Endothelial cell of umbilical vein (primary cell): ENCODE measurements at regions of chr18 and their contacts with region 1.

Region 1: DNA sequence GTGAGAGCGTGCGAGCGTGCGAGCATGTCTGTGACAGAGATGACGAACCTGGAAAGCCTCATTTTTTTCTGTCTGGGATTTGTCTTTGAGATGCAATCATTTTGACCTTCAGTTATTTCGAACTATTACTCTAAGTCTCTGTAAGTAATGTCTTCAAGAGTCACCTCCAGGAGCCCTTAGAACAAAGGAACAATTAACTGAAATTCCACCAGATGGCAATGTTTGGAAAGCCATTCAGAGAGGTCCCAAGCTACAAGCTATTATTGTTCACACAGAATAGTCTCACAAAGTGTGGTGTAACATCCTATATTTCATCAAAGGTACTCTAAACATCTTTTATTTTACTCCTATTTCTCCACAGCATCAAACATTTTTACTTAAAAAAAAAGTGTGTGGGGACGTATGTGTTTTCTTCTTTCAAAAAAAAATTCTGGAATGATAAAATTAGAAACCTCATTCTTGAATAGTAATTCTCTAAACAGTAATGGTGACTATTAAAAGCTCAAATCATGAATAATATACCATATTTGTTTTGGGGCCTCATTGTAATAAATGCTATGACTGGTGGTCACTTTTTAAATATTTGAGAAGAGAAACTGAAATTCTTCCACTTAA is 35.1 kb upstream of the MAPRE2 start:
- DNase-seq: peak; percentile 83
- H3K4me3 ChIP-seq: no peak overlapping the region
- H3K27ac ChIP-seq: no peak overlapping the region
- H3K4me1 ChIP-seq: peaks cover 4% of the 10 kb centered on the region
- H3K27me3 ChIP-seq: no peaks in the 10 kb centered on the region
- CTCF ChIP-seq: peak; percentile 27 to 38
- POLR2A ChIP-seq: no peak

Region 2: GRCh38 chr18:35019933-35020332 is 13.9 kb after region 1 on chr18:
- CTCF ChIA-PET with region 1: interaction called, 14 read pairs
- POLR2A ChIA-PET with region 1: no interaction called
- dilution Hi-C with region 1: no loop called
- intact Hi-C with region 1: loop called (anchors 1 kb)
- DNase-seq: peak; percentile 33
- H3K4me3 ChIP-seq: no peak overlapping the region
- H3K27ac ChIP-seq: no peak overlapping the region
- H3K4me1 ChIP-seq: peaks cover 9% of the 10 kb centered on the region
- H3K27me3 ChIP-seq: no peaks in the 10 kb centered on the region
- CTCF ChIP-seq: no peak
- POLR2A ChIP-seq: no peak

Region 3: GRCh38 chr18:35040988-35041814 is 35.1 kb after region 1 on chr18 and contains the start of gene MAPRE2:
- CTCF ChIA-PET with region 1: interaction called, 59 read pairs
- POLR2A ChIA-PET with region 1: no interaction called
- dilution Hi-C with region 1: no loop called
- intact Hi-C with region 1: loop called (anchors 1 kb)
- DNase-seq: peak; percentile 99
- H3K4me3 ChIP-seq: peak within 1 kb of the TSS; percentile 88 to 99 (median 89)
- H3K27ac ChIP-seq: peak within 1 kb of the TSS; percentile 80
- H3K4me1 ChIP-seq: peaks cover 61% of the 10 kb centered on the region
- H3K27me3 ChIP-seq: no peaks in the 10 kb centered on the region
- CTCF ChIP-seq: no peak
- POLR2A ChIP-seq: peak; percentile 96
- total RNA-seq, gene MAPRE2: 111 and 117 TPM in 2 replicates

Region 4: GRCh38 chr18:35127201-35127600 is 121.1 kb after region 1 on chr18:
- CTCF ChIA-PET with region 1: interaction called, 20 read pairs
- POLR2A ChIA-PET with region 1: no interaction called
- dilution Hi-C with region 1: no loop called
- intact Hi-C with region 1: loop called (anchors 1 kb)
- DNase-seq: peak; percentile 21
- H3K4me3 ChIP-seq: no peak overlapping the region
- H3K27ac ChIP-seq: no peak overlapping the region
- H3K4me1 ChIP-seq: peaks cover 9% of the 10 kb centered on the region
- H3K27me3 ChIP-seq: no peaks in the 10 kb centered on the region
- CTCF ChIP-seq: peak in 1 of 2 donors; percentile 28
- POLR2A ChIP-seq: no peak

Region 5: DNA sequence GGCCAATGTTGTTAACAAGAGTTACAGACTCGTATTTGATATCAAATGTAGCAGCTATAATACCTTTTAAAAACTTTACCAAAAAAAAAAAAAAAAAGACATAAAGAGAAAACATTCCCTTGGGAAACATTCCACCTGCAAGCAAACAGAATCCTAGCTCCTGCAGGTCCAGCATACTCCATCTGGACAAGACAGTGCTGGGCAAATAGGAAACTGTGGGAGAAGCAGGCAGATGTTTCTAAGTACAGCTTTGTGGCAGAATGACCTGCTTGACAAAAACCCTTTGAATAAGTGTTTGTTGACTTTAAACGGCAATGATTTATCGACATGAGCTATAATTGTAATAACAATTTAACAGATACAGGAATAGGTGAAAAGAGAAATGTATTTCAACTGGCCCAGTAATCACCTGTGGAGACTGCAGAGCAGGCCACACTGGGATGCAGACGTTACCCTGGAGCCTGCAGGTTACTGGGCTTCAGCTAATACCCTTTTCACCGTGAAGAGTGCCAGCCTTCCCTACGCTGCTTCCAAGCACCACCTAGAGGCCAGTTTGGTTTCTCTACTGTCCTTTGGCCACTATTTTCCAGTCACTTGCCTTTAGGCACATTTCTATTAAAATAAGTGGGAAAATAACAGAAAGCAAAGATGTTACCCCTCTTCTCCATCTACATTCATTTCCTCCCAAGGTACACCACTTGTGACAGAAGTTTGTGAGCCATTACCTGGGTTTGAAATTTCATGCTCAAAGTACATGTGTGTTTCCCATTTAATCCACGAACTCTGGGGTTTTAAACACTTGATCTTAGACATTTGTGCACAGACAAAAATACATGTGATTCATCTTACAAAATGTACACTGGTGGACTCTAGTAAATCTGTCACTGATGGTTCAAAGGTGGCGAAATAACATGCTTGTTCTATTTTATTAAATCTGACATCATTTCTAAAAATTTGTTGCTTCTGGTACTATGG is 137.8 kb after region 1 on chr18:
- CTCF ChIA-PET with region 1: interaction called, 266 read pairs
- POLR2A ChIA-PET with region 1: no interaction called
- dilution Hi-C with region 1: no loop called
- intact Hi-C with region 1: loop called (anchors 1 kb)
- DNase-seq: peak; percentile 80
- H3K4me3 ChIP-seq: no peak overlapping the region
- H3K27ac ChIP-seq: no peak overlapping the region
- H3K4me1 ChIP-seq: no peaks in the 10 kb centered on the region
- H3K27me3 ChIP-seq: no peaks in the 10 kb centered on the region
- CTCF ChIP-seq: peak; percentile 57 to 80
- POLR2A ChIP-seq: no peak

Region 6: GRCh38 chr18:35343936-35344735 is 338.1 kb after region 1 on chr18 and contains the start of gene ZNF24:
- CTCF ChIA-PET with region 1: interaction called, 5 read pairs
- POLR2A ChIA-PET with region 1: no interaction called
- dilution Hi-C with region 1: no loop called
- intact Hi-C with region 1: loop called (anchors 5 kb)
- DNase-seq: peak; percentile 92
- H3K4me3 ChIP-seq: peak within 1 kb of the TSS; percentile 69 to 97 (median 92)
- H3K27ac ChIP-seq: peak within 1 kb of the TSS; percentile 95
- H3K4me1 ChIP-seq: peaks cover 18% of the 10 kb centered on the region
- H3K27me3 ChIP-seq: no peaks in the 10 kb centered on the region
- CTCF ChIP-seq: no peak
- POLR2A ChIP-seq: peak; percentile 82
- total RNA-seq, gene ZNF24: 38.6 and 40.2 TPM in 2 replicates